Activated CD8-positive, alpha-beta memory T cell treated with anti-CD3 and anti-CD28 coated beads, Interleukin-2, amount 10 ng/mL, durations not matched to agents 7 days and 5 days (primary cell): ENCODE measurements at regions of chr11 and their contacts with region 1.

Region 1: DNA sequence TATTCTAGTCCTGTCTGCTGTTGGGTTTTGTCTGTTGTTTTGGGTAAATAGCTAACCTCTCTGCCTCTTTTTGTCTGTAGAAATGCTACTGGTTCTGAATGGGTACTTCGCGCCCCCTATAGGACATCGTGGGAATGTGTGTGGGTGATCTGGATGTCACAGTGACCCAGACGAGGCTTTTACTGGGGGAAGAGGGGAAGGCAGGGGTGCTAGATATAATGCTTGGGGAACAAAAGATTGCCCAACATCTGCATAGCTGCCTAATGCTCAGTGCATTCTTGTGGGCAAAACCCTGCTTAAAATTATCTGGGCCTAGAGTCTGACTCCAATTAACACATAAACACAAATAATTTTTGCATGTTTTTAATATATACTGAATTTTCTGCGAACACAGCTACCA is 57.7 kb downstream of the BMAL1 start:
- DNase-seq: peak; percentile 86
- ATAC-seq: peak; percentile 41
- H3K4me3 Mint-ChIP-seq: no peak overlapping the region
- H3K27ac Mint-ChIP-seq: peak overlapping the region; percentile 26
- H3K4me1 Mint-ChIP-seq: peaks cover 84% of the 10 kb centered on the region
- H3K27me3 Mint-ChIP-seq: no peaks in the 10 kb centered on the region

Region 2: DNA sequence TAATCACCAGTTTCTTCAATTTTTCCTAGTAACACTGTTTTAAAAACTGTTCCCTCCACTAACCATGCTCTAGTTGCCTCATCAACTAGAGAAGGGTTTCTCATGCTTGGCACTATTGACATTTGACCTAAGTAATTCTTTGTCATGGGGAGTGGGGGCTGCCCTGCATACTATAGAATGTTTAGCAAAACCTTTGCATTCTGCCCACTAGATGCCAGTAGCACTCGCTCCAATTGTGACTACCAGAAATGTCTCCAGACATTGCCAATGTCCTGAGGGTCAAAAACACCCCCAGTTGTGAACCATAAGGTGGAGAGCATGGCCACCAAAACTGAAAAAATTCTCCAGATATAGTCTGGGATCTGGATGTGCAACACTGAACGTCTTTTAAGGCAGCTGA is 85.3 kb before region 1 on chr11:
- CTCF ChIA-PET with region 1: interaction called, 31 read pairs
- DNase-seq: no peak
- ATAC-seq: no peak
- H3K4me3 Mint-ChIP-seq: no peak overlapping the region
- H3K27ac Mint-ChIP-seq: no peak overlapping the region
- H3K4me1 Mint-ChIP-seq: no peaks in the 10 kb centered on the region
- H3K27me3 Mint-ChIP-seq: peaks cover 24% of the 10 kb centered on the region

Region 3: GRCh38 chr11:13269775-13270174 is 65.5 kb before region 1 on chr11:
- CTCF ChIA-PET with region 1: interaction called, 12 read pairs
- DNase-seq: no peak
- ATAC-seq: no peak
- H3K4me3 Mint-ChIP-seq: no peak overlapping the region
- H3K27ac Mint-ChIP-seq: no peak overlapping the region
- H3K4me1 Mint-ChIP-seq: peaks cover 14% of the 10 kb centered on the region
- H3K27me3 Mint-ChIP-seq: peaks cover 58% of the 10 kb centered on the region

Region 4: GRCh38 chr11:13289081-13289480 is 46.2 kb before region 1 on chr11:
- CTCF ChIA-PET with region 1: interaction called, 63 read pairs
- DNase-seq: no peak
- ATAC-seq: no peak
- H3K4me3 Mint-ChIP-seq: no peak overlapping the region
- H3K27ac Mint-ChIP-seq: peak overlapping the region; percentile 82
- H3K4me1 Mint-ChIP-seq: peaks cover 90% of the 10 kb centered on the region
- H3K27me3 Mint-ChIP-seq: no peaks in the 10 kb centered on the region

Region 5: GRCh38 chr11:13316528-13316961 is 18.8 kb before region 1 on chr11:
- CTCF ChIA-PET with region 1: interaction called, 20 read pairs
- DNase-seq: no peak
- ATAC-seq: no peak
- H3K4me3 Mint-ChIP-seq: no peak overlapping the region
- H3K27ac Mint-ChIP-seq: no peak overlapping the region
- H3K4me1 Mint-ChIP-seq: peaks cover 71% of the 10 kb centered on the region
- H3K27me3 Mint-ChIP-seq: no peaks in the 10 kb centered on the region